ENCODE measurements at regions of chr6 and their contacts with region 1.

Region 1: GRCh38 chr6:39302669-39303424 is 11.4 kb downstream of the KCNK17 start:
- DNase-seq: peak; percentile 95
- H3K4me3 Mint-ChIP-seq: peak overlapping the region; percentile 16
- H3K27ac Mint-ChIP-seq: no peak overlapping the region
- H3K4me1 Mint-ChIP-seq: peaks cover 6% of the 10 kb centered on the region
- H3K27me3 Mint-ChIP-seq: no peaks in the 10 kb centered on the region

Region 2: DNA sequence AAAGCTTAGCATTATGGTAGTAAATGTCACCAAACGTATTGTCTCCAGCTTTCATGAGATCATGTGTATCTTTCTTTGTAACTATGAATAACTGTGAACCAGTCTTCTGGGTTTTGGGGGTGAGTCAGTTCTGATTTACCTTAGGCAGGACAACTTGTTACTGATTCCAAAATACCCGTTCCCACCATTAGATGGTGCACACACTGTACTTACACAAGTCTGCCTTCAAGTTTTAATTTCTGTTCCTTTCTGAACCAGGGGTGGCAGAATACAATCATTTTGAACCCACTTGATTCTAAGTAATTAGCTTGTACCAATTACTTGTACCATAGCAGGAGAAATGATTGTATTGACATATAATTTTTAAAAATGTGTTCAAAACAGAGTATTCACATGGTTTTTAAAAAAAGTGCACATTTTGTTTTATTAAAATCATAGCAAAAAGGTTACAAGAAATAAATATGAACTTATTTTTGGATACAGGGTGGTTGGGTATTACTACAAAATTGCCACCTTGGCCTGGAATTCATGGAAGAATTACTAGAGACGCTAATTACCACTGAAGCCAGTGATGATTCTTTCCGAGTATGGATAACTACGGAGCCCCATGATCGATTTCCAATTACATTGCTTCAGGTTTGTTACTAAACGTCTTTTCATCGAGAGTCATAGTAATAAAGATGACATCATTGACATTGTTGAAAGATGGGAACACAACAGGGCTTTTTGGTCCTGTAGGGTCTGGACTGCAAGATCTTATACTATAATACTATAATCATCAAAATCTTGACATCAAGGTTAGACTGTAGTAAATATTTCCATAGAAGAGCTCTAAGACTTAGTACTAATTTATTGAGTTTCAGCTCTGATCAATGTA is 329.4 kb before region 1 on chr6:
- CTCF ChIA-PET with region 1: interaction called, 14 read pairs
- intact Hi-C with region 1: loop called (anchors 1 kb)
- DNase-seq: peak; percentile 60
- H3K4me3 Mint-ChIP-seq: no peak overlapping the region
- H3K27ac Mint-ChIP-seq: no peak overlapping the region
- H3K4me1 Mint-ChIP-seq: no peaks in the 10 kb centered on the region
- H3K27me3 Mint-ChIP-seq: no peaks in the 10 kb centered on the region

Region 3: DNA sequence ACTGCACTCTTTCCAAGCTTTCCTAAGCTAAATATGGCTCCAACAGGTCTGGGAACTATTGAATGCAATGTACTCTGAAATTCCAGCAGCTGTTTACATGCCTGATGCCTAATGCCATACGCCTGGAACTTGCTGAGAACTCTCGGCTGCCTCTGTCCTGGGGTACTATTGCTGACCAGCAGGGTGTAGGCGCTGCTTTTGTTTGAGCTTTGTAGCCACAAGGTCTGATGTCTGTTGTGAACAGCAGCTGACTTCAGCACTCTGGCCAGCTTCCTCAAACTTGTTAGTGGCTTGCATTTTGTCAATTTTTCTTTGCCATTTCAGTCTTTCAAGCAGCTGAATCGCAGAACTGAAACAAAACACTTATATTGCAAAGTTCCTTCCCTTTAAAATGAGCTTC is 214.5 kb before region 1 on chr6:
- CTCF ChIA-PET with region 1: interaction called, 5 read pairs
- intact Hi-C with region 1: loop called (anchors 1 kb)
- DNase-seq: peak; percentile 45
- H3K4me3 Mint-ChIP-seq: no peak overlapping the region
- H3K27ac Mint-ChIP-seq: no peak overlapping the region
- H3K4me1 Mint-ChIP-seq: peaks cover 3% of the 10 kb centered on the region
- H3K27me3 Mint-ChIP-seq: peaks cover 33% of the 10 kb centered on the region

Region 4: DNA sequence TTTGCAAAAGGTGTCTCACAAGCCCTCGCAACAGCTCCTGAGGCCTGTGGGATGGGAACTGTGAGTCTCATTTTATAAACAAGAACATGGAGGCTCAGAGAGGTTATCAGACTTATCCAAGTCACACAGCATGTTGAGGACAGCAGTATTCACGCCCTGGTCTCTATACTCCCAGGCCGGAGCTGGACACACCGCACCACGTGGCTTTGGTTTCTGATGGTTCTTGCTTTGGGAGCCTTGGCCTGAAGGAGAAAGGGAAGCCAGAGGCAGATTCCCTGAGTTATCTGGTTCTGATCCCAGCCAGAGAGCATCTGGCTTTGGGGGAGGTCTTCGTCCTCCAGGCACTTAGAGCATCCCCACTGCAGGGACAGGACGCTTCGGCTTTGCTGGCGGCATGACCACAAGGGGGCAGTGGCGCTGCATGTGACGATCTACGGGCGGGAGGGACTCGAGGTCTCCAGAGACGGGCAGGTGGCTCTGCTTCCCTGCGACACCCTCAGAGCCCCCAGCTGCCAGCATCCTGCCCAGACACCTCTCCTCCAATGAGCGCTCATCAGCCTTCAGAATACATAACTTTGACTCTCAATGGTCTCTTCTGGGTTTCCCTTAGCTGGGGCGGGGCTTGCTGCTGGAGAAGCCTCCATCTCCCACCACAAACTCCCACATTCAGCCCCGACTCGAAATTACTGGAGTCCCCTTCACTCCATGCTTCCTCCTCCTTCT is 136.5 kb before region 1 on chr6:
- CTCF ChIA-PET with region 1: interaction called, 391 read pairs
- intact Hi-C with region 1: loop called (anchors 1 kb)
- DNase-seq: peak; percentile 91
- H3K4me3 Mint-ChIP-seq: no peak overlapping the region
- H3K27ac Mint-ChIP-seq: no peak overlapping the region
- H3K4me1 Mint-ChIP-seq: no peaks in the 10 kb centered on the region
- H3K27me3 Mint-ChIP-seq: no peaks in the 10 kb centered on the region

Region 5: GRCh38 chr6:39228992-39229767 is 73.7 kb before region 1 on chr6 and contains the start of gene KCNK5:
- CTCF ChIA-PET with region 1: interaction called, 6 read pairs
- intact Hi-C with region 1: loop called (anchors 1 kb)
- DNase-seq: peak; percentile 89
- H3K4me3 Mint-ChIP-seq: peak within 1 kb of the TSS; percentile 87
- H3K27ac Mint-ChIP-seq: peak within 1 kb of the TSS; percentile 87
- H3K4me1 Mint-ChIP-seq: peaks cover 44% of the 10 kb centered on the region
- H3K27me3 Mint-ChIP-seq: peaks cover 1% of the 10 kb centered on the region
- total RNA-seq, gene KCNK5: 9.0 to 9.2 TPM

Region 6: DNA sequence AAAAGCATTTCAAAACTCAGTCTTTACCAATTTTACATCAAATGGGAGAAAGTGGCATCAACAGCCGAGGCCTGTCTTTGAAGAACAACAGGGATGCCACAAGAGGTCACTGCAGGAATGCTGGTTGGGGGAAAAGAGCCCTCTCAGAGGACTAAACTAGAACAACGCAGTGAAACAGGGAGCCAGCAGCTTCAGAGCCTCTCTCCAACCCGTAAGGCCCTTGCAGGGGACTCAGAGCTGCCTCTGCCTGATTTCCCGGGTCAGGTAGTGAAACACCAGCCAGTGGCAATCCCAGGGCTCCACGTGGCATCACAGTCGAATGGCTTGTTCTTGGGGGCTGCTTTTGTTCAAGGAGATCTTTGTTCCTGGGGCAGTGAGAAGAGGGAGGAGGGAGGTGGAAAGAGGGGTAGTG is 74.7 kb after region 1 on chr6:
- CTCF ChIA-PET with region 1: no interaction called
- intact Hi-C with region 1: no loop called
- DNase-seq: peak; percentile 41
- H3K4me3 Mint-ChIP-seq: no peak overlapping the region
- H3K27ac Mint-ChIP-seq: no peak overlapping the region
- H3K4me1 Mint-ChIP-seq: no peaks in the 10 kb centered on the region
- H3K27me3 Mint-ChIP-seq: no peaks in the 10 kb centered on the region

Region 7: DNA sequence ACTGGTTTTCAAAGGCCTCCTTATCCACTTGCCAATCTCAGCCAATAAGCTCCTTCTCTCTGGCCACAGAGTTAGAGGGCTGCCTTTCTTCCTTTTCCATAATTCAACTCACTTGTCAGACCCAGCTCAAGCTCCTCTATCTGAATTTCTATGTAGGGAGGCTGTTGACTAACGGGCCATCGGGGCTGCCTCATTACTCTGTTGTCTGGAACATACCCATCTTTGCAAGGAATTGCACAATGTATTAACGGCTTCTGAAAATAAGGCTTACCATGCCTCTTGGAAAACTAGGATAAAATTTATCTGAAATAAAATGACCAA is 450.8 kb after region 1 on chr6:
- CTCF ChIA-PET with region 1: no interaction called
- intact Hi-C with region 1: no loop called
- DNase-seq: no peak
- H3K4me3 Mint-ChIP-seq: no peak overlapping the region
- H3K27ac Mint-ChIP-seq: no peak overlapping the region
- H3K4me1 Mint-ChIP-seq: no peaks in the 10 kb centered on the region
- H3K27me3 Mint-ChIP-seq: peaks cover 11% of the 10 kb centered on the region